ENCODE measurements at regions of chr20 and their contacts with region 1.

Region 1: GRCh38 chr20:58065508-58066361 is 162.7 kb downstream of the ANKRD60 start:
- DNase-seq: peak; percentile 45 to 86
- H3K4me3 ChIP-seq: no peak overlapping the region
- H3K27ac ChIP-seq: peak overlapping the region; percentile 78
- H3K4me1 ChIP-seq: peaks cover 27% of the 10 kb centered on the region
- H3K27me3 ChIP-seq: no peaks in the 10 kb centered on the region
- CTCF ChIP-seq: no peak

Region 2: GRCh38 chr20:58028123-58028522 is 37.6 kb before region 1 on chr20:
- CTCF ChIA-PET with region 1: no interaction called
- POLR2A ChIA-PET with region 1: no interaction called
- intact Hi-C with region 1: no loop called
- DNase-seq: no peak
- H3K4me3 ChIP-seq: no peak overlapping the region
- H3K27ac ChIP-seq: no peak overlapping the region
- H3K4me1 ChIP-seq: peaks cover 15% of the 10 kb centered on the region
- H3K27me3 ChIP-seq: no peaks in the 10 kb centered on the region
- CTCF ChIP-seq: no peak; the same call in 1 of the 2 replicates

Region 3: DNA sequence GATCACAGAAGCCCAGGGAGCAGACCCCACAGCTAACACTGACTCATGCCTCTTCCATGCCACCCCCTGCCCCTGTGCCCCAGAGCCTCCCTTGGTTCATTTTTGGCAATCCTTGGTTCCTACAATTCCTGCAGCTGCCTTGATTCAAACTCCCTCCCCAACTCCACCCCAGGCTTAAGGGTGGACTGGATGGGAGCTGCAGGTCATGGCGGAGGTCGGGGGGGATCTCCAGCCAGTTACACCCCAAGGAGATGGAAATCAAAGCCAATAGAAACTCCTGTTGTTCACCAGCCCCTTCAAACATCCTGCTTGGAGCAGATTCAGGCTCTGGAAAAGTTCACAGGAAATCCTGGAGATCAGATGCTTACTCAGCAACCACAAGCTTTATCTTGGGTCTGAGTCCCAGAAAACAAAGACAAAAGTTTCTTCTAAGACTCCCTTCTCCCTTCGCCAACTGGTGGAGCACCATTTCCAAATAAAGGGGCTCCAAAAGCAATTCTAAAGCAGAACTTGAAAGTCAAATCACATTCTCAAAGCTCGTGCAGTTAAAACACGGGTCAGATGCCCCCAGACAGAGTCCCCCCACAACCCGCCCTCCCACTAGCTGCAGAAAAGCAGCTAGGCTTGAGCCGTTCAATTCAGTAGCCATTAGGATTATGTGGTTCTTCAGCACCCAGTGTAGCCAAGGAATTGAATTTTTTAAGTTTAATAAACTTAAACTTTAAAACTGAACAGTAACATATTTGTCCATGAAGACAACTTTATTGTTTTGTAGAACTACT is 13.2 kb after region 1 on chr20:
- CTCF ChIA-PET with region 1: interaction called, 17 read pairs
- POLR2A ChIA-PET with region 1: no interaction called
- intact Hi-C with region 1: no loop called
- DNase-seq: no peak
- H3K4me3 ChIP-seq: no peak overlapping the region
- H3K27ac ChIP-seq: no peak overlapping the region
- H3K4me1 ChIP-seq: peaks cover 16% of the 10 kb centered on the region
- H3K27me3 ChIP-seq: no peaks in the 10 kb centered on the region
- CTCF ChIP-seq: no peak

Region 4: GRCh38 chr20:58219301-58219700 is 153.6 kb after region 1 on chr20:
- CTCF ChIA-PET with region 1: no interaction called
- POLR2A ChIA-PET with region 1: no interaction called
- intact Hi-C with region 1: no loop called
- DNase-seq: peak; percentile 26 to 75
- H3K4me3 ChIP-seq: peak overlapping the region; percentile 24; the same call in 1 of the 2 replicates
- H3K27ac ChIP-seq: no peak overlapping the region
- H3K4me1 ChIP-seq: 0 out of 2 replicates have a peak, but pooled peaks cover 6% of the 10 kb centered on the region
- H3K27me3 ChIP-seq: no peaks in the 10 kb centered on the region
- CTCF ChIP-seq: peak; percentile 49; the same call in 1 of the 2 replicates

Measured in PC-9 (cell line).